ENCODE measurements at regions of chr10 and their contacts with region 1.

Region 1: DNA sequence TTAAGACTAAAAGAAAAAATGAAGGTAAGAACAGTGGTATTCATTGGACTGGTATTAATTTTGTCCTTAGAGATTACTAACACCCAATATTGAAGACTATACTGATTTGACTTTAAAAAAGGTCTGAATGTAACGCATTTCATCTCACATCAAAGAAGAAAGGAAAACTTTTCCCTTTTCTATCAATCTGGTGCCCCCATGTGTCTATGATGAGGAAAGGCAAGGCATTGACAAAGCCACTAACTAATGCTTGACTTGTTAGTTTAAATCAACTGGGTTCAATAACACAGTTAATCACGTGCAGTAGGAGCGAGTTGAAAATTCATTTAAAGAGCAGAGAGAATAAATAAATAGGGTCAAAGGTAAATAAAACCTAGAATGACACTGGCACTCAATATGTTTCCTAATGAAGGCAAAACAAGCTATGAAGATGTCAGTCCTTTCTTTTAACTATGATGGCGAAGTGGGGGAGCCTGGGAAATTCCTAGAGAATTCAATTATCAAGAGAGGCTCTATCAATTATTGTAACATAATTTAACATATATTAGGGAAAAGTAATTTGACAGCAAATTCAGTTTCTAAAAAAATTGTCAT is 180.9 kb downstream of the ANK3 start:
- DNase-seq: no peak
- ATAC-seq: peak; percentile 40
- H3K4me3 Mint-ChIP-seq: no peak overlapping the region
- H3K27ac Mint-ChIP-seq: no peak overlapping the region
- H3K4me1 Mint-ChIP-seq: peaks cover 33% of the 10 kb centered on the region
- H3K27me3 Mint-ChIP-seq: no peaks in the 10 kb centered on the region
- CTCF ChIP-seq: no peak

Region 2: GRCh38 chr10:59240582-59241183 is 968.1 kb before region 1 on chr10:
- CTCF ChIA-PET with region 1: no interaction called
- POLR2A ChIA-PET with region 1: no interaction called
- intact Hi-C with region 1: loop called (anchors 5 kb)
- DNase-seq: no peak
- ATAC-seq: no peak
- H3K4me3 Mint-ChIP-seq: no peak overlapping the region
- H3K27ac Mint-ChIP-seq: no peak overlapping the region
- H3K4me1 Mint-ChIP-seq: no peaks in the 10 kb centered on the region
- H3K27me3 Mint-ChIP-seq: peaks cover 11% of the 10 kb centered on the region
- CTCF ChIP-seq: no peak

Region 3: GRCh38 chr10:59830601-59831259 is 378.0 kb before region 1 on chr10:
- CTCF ChIA-PET with region 1: interaction called, 3 read pairs
- POLR2A ChIA-PET with region 1: no interaction called
- intact Hi-C with region 1: loop called (anchors 10 kb)
- DNase-seq: no peak
- ATAC-seq: peak; percentile 50
- H3K4me3 Mint-ChIP-seq: no peak overlapping the region
- H3K27ac Mint-ChIP-seq: no peak overlapping the region
- H3K4me1 Mint-ChIP-seq: peaks cover 69% of the 10 kb centered on the region
- H3K27me3 Mint-ChIP-seq: no peaks in the 10 kb centered on the region
- CTCF ChIP-seq: peak; percentile 21

Region 4: DNA sequence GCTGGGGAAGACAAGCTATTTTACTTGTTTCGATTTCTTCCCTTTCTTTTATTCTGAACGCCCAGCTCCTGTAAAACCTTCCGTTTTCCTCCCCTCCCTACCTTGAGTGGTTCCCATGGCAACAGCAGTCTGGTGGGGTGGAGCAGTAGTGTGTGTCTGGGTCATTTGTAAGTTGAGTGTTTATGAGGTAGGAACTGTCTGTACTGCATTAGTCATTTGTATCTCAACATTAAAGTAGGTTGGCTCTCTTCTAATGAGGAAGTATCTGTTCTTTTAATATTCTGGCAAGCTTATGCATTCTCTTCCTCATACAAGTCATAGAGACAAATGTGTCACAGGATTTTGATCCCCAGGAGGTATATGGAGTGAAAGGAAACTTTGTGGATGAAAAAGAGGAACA is 217.1 kb before region 1 on chr10:
- CTCF ChIA-PET with region 1: no interaction called
- POLR2A ChIA-PET with region 1: no interaction called
- intact Hi-C with region 1: no loop called
- DNase-seq: no peak
- ATAC-seq: peak; percentile 99
- H3K4me3 Mint-ChIP-seq: peak overlapping the region; percentile 74
- H3K27ac Mint-ChIP-seq: peak overlapping the region; percentile 7
- H3K4me1 Mint-ChIP-seq: peaks cover 12% of the 10 kb centered on the region
- H3K27me3 Mint-ChIP-seq: no peaks in the 10 kb centered on the region
- CTCF ChIP-seq: no peak

Region 5: DNA sequence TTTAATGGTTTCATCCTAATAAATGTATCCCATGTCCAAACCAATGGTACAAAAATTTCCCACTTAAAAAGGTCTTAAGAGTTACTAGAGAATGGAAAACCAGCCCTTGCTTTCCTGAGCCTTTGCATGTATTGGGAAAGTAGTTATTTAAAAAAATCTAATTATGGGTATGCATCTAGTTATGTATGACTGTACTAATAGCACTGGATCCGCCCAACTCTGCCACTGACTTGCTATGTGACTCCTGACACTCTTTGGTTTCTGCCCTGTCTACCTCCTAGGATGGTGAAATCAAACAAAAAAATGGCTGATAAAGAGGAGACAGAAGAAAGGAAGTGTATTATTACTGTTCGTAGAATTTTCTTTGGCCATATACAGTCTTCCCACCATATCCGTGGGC is 192.0 kb before region 1 on chr10:
- CTCF ChIA-PET with region 1: no interaction called
- POLR2A ChIA-PET with region 1: no interaction called
- intact Hi-C with region 1: no loop called
- DNase-seq: no peak
- ATAC-seq: no peak
- H3K4me3 Mint-ChIP-seq: no peak overlapping the region
- H3K27ac Mint-ChIP-seq: no peak overlapping the region
- H3K4me1 Mint-ChIP-seq: no peaks in the 10 kb centered on the region
- H3K27me3 Mint-ChIP-seq: peaks cover 3% of the 10 kb centered on the region
- CTCF ChIP-seq: no peak

Region 6: GRCh38 chr10:60099998-60100747 is 108.6 kb before region 1 on chr10:
- CTCF ChIA-PET with region 1: interaction called, 16 read pairs
- POLR2A ChIA-PET with region 1: no interaction called
- intact Hi-C with region 1: loop called (anchors 1 kb)
- DNase-seq: no peak
- ATAC-seq: no peak
- H3K4me3 Mint-ChIP-seq: no peak overlapping the region
- H3K27ac Mint-ChIP-seq: no peak overlapping the region
- H3K4me1 Mint-ChIP-seq: no peaks in the 10 kb centered on the region
- H3K27me3 Mint-ChIP-seq: no peaks in the 10 kb centered on the region
- CTCF ChIP-seq: peak; percentile 70

Region 7: GRCh38 chr10:60335708-60336107 is 126.9 kb after region 1 on chr10:
- CTCF ChIA-PET with region 1: interaction called, 4 read pairs
- POLR2A ChIA-PET with region 1: no interaction called
- intact Hi-C with region 1: loop called (anchors 5 kb)
- DNase-seq: no peak
- ATAC-seq: no peak
- H3K4me3 Mint-ChIP-seq: no peak overlapping the region
- H3K27ac Mint-ChIP-seq: no peak overlapping the region
- H3K4me1 Mint-ChIP-seq: no peaks in the 10 kb centered on the region
- H3K27me3 Mint-ChIP-seq: no peaks in the 10 kb centered on the region
- CTCF ChIP-seq: no peak

Region 8: GRCh38 chr10:60444494-60445064 is 235.8 kb after region 1 on chr10:
- CTCF ChIA-PET with region 1: interaction called, 10 read pairs
- POLR2A ChIA-PET with region 1: no interaction called
- intact Hi-C with region 1: no loop called
- DNase-seq: no peak
- ATAC-seq: no peak
- H3K4me3 Mint-ChIP-seq: no peak overlapping the region
- H3K27ac Mint-ChIP-seq: no peak overlapping the region
- H3K4me1 Mint-ChIP-seq: peaks cover 8% of the 10 kb centered on the region
- H3K27me3 Mint-ChIP-seq: no peaks in the 10 kb centered on the region
- CTCF ChIP-seq: no peak

Region 9: DNA sequence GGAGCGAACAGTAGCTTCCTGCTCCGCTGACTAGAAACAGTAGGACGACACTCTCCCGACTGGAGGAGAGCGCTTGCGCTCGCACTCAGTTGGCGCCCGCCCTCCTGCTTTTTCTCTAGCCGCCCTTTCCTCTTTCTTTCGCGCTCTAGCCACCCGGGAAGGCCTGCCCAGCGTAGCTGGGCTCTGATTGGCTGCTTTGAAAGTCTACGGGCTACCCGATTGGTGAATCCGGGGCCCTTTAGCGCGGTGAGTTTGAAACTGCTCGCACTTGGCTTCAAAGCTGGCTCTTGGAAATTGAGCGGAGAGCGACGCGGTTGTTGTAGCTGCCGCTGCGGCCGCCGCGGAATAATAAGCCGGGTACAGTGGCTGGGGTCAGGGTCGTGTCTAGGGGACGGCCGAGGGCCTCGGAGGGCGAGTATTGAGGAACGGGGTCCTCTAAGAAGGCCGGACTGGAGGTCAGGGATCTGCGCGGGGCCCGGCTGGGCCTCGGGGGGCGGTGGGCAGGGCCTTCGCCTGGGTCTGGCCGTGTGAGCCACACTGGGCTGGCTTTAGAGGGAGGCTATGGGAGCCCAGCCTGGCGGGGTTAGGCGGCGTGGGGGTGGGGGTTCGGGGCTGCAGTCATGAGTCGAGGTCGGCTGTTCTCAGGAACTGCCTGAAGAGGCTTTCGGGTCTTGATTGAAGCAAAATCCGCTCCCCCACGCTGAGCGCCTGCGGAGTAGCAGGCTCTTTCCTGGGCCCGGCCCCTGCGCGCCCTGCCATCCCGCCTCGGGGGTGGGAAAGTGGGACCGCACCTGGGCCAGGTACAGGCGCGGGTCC is 569.6 kb after region 1 on chr10 and contains the start of gene CDK1:
- CTCF ChIA-PET with region 1: no interaction called
- POLR2A ChIA-PET with region 1: no interaction called
- intact Hi-C with region 1: loop called (anchors 10 kb)
- DNase-seq: peak; percentile 86
- ATAC-seq: peak; percentile 99
- H3K4me3 Mint-ChIP-seq: peak within 1 kb of the TSS; percentile 96
- H3K27ac Mint-ChIP-seq: peak within 1 kb of the TSS; percentile 84
- H3K4me1 Mint-ChIP-seq: peaks cover 17% of the 10 kb centered on the region
- H3K27me3 Mint-ChIP-seq: peaks cover 3% of the 10 kb centered on the region
- CTCF ChIP-seq: no peak
- total RNA-seq, gene CDK1: 1.5 and 1.9 TPM in 2 replicates

Measured in activated B cell treated with CpG ODN at 0.5 μM for 24 hours (primary cell).